Kidney (tissue), 22 donors: ENCODE measurements at regions of chr9 and their contacts with region 1.

Region 1: DNA sequence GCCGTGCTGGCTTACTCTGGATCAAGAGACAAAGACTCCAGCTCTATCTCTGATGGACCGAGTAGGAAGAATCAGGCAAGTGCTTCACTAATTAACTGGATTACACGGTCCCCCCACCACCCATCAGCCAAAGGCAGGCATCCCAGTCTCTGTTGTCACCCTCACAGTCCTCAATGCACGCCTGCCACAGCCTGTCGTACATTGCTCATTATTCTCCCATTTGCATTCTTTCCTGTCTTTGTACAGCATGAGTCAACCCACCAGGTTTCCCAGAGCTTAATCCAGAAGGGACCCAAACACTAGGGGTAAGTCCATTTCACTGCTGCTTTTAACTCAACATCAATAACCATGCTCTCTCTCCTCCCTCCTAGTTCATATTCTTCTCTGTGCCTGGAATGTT is 44.4 kb downstream of the PCA3 start:
- DNase-seq: no peak
- H3K4me3 ChIP-seq: no peak overlapping the region
- H3K27ac ChIP-seq: no peak overlapping the region
- H3K4me1 ChIP-seq: no peaks in the 10 kb centered on the region
- H3K27me3 ChIP-seq: no peaks in the 10 kb centered on the region
- CTCF ChIP-seq: no peak

Region 2: GRCh38 chr9:76882686-76883085 is 74.0 kb after region 1 on chr9:
- intact Hi-C with region 1: no loop called
- DNase-seq: no peak
- H3K4me3 ChIP-seq: no peak overlapping the region
- H3K27ac ChIP-seq: no peak overlapping the region
- H3K4me1 ChIP-seq: no peaks in the 10 kb centered on the region
- H3K27me3 ChIP-seq: no peaks in the 10 kb centered on the region
- CTCF ChIP-seq: no peak

Region 3: GRCh38 chr9:76996700-76997099 is 188.1 kb after region 1 on chr9:
- intact Hi-C with region 1: loop called (anchors 10 kb)
- DNase-seq: peak in 4 of 5 donors; percentile 59 to 67 (median 61)
- H3K4me3 ChIP-seq: no peak overlapping the region
- H3K27ac ChIP-seq: no peak overlapping the region
- H3K4me1 ChIP-seq: no peaks in the 10 kb centered on the region
- H3K27me3 ChIP-seq: no peaks in the 10 kb centered on the region
- CTCF ChIP-seq: peak; percentile 39